ENCODE measurements at regions of chr10 and their contacts with region 1.

Region 1: DNA sequence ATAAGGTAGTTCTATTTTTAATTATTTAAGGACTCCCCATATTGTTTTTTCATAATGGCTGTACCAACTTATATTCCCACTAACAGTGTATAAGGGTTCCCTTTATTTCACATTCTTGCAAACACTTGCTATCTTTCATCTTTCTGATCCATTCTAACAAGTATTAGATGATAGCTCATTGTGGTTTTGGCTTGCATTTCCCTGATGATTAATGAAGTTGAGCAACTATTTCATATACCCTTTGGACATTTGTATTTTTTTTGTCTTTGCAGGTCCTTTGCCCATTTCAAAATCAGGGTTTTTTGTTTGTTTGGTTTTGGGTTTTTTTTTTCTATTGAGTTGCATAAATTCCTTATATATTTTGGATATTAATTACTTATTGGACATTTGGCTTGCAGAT is 107.2 kb downstream of the EPC1 start:
- DNase-seq: no peak
- ATAC-seq: no peak
- H3K4me3 Mint-ChIP-seq: no peak overlapping the region
- H3K27ac Mint-ChIP-seq: no peak overlapping the region
- H3K4me1 Mint-ChIP-seq: peaks cover 13% of the 10 kb centered on the region
- H3K27me3 Mint-ChIP-seq: no peaks in the 10 kb centered on the region

Region 2: DNA sequence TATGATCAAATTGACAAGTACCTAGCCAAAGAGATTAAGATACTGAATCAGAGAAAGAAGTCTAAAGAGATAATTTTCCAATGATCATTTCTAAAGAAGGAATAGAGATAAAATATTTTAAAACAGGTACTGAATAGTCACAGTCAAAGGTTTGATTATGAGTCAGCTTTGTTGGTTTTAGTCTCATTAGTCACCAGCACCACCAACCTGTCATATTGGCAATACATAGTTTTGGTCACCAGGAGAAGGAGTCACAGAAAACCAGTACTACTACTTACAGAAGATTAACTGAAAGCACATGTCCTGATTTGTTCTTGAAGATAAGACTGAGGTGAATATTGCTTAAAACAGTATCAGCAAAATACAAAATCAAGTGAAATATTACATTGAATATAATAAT is 886.2 kb before region 1 on chr10:
- CTCF ChIA-PET with region 1: no interaction called
- POLR2A ChIA-PET with region 1: no interaction called
- intact Hi-C with region 1: loop called in 1 of 2 experiments (anchors 5 kb)
- DNase-seq: peak; percentile 27
- ATAC-seq: peak; percentile 99
- H3K4me3 Mint-ChIP-seq: no peak overlapping the region
- H3K27ac Mint-ChIP-seq: no peak overlapping the region
- H3K4me1 Mint-ChIP-seq: peaks cover 59% of the 10 kb centered on the region
- H3K27me3 Mint-ChIP-seq: no peaks in the 10 kb centered on the region

Region 3: GRCh38 chr10:32256613-32257437 is 17.1 kb after region 1 on chr10:
- CTCF ChIA-PET with region 1: interaction called, 16 read pairs
- POLR2A ChIA-PET with region 1: interaction called, 3 read pairs
- intact Hi-C with region 1: no loop called
- DNase-seq: peak; percentile 80
- ATAC-seq: peak; percentile 74
- H3K4me3 Mint-ChIP-seq: no peak overlapping the region
- H3K27ac Mint-ChIP-seq: no peak overlapping the region
- H3K4me1 Mint-ChIP-seq: peaks cover 9% of the 10 kb centered on the region
- H3K27me3 Mint-ChIP-seq: no peaks in the 10 kb centered on the region

Region 4: DNA sequence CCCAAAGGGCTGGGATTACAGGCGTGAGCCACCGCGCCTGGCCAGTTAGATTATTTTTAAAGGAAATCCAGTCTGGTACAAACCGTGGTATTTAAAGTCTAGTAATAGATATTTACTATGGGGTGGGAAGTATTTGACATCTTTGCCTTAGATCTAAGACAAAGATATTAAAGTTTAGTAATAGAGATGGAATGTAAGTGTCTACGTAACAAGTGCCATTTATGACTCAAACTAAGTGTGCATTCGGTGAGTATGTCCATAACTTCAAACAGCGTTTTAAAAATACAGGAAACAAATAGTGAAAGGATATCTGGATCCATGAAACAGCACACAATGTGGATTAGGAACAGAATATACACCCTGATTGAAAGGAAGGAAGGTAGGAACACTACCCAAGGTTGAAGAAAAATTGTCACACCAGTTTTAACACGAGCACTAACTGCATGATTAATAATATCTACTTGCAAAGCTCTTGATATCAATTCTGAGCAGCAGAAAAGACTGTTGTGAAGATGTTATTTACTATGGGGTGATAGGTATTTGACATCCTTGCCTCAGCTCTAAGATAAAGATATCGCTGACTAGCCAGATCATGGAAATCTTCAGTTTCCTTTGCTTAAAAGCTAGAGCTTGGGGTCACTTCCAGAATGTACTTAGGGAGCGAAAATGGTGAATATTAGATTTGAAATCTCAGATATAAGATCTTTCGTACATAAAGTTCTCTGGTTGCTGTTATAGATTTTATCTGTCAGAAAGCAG is 58.5 kb after region 1 on chr10:
- CTCF ChIA-PET with region 1: no interaction called
- POLR2A ChIA-PET with region 1: no interaction called
- intact Hi-C with region 1: no loop called
- DNase-seq: no peak
- ATAC-seq: no peak
- H3K4me3 Mint-ChIP-seq: peak overlapping the region; percentile 50
- H3K27ac Mint-ChIP-seq: peak overlapping the region; percentile 82
- H3K4me1 Mint-ChIP-seq: peaks cover 59% of the 10 kb centered on the region
- H3K27me3 Mint-ChIP-seq: no peaks in the 10 kb centered on the region

Region 5: GRCh38 chr10:32346134-32346550 is 106.4 kb after region 1 on chr10:
- CTCF ChIA-PET with region 1: no interaction called
- POLR2A ChIA-PET with region 1: interaction called, 5 read pairs
- intact Hi-C with region 1: loop called in 1 of 2 experiments (anchors 2 kb)
- DNase-seq: peak; percentile 98
- ATAC-seq: peak; percentile 88
- H3K4me3 Mint-ChIP-seq: peak overlapping the region; percentile 84
- H3K27ac Mint-ChIP-seq: peak overlapping the region; percentile 99
- H3K4me1 Mint-ChIP-seq: peaks cover 71% of the 10 kb centered on the region
- H3K27me3 Mint-ChIP-seq: no peaks in the 10 kb centered on the region

Region 6: GRCh38 chr10:33115738-33116719 is 876.3 kb after region 1 on chr10:
- CTCF ChIA-PET with region 1: no interaction called
- POLR2A ChIA-PET with region 1: no interaction called
- intact Hi-C with region 1: loop called in 1 of 2 experiments (anchors 1 kb)
- DNase-seq: no peak
- ATAC-seq: peak; percentile 30
- H3K4me3 Mint-ChIP-seq: no peak overlapping the region
- H3K27ac Mint-ChIP-seq: peak overlapping the region; percentile 62
- H3K4me1 Mint-ChIP-seq: peaks cover 86% of the 10 kb centered on the region
- H3K27me3 Mint-ChIP-seq: no peaks in the 10 kb centered on the region

Region 7: DNA sequence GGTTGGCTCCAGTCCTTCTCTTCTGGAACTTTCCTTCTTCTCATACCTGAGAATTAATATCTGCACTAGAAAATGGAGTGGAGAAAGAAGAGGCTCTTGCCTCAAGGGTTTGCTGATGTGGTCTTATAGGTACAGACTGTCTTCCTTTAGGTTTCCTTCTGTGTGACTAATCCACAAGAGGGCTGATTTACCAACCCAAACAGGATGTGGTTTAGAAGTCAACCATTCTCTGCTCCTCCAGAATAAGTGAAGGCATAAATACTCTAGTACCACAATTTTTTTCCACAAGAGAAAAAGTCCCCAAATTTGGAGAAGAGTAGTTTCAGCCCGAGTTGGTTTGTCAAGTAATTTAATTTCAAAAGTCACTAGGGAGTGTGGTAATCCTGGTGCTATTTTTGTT is 1008.9 kb after region 1 on chr10:
- CTCF ChIA-PET with region 1: no interaction called
- POLR2A ChIA-PET with region 1: no interaction called
- intact Hi-C with region 1: loop called in 1 of 2 experiments (anchors 5 kb)
- DNase-seq: peak; percentile 30
- ATAC-seq: peak; percentile 83
- H3K4me3 Mint-ChIP-seq: no peak overlapping the region
- H3K27ac Mint-ChIP-seq: peak overlapping the region; percentile 39
- H3K4me1 Mint-ChIP-seq: peaks cover 71% of the 10 kb centered on the region
- H3K27me3 Mint-ChIP-seq: peaks cover 12% of the 10 kb centered on the region